ENCODE measurements at regions of chr17 and their contacts with region 1.

Region 1: DNA sequence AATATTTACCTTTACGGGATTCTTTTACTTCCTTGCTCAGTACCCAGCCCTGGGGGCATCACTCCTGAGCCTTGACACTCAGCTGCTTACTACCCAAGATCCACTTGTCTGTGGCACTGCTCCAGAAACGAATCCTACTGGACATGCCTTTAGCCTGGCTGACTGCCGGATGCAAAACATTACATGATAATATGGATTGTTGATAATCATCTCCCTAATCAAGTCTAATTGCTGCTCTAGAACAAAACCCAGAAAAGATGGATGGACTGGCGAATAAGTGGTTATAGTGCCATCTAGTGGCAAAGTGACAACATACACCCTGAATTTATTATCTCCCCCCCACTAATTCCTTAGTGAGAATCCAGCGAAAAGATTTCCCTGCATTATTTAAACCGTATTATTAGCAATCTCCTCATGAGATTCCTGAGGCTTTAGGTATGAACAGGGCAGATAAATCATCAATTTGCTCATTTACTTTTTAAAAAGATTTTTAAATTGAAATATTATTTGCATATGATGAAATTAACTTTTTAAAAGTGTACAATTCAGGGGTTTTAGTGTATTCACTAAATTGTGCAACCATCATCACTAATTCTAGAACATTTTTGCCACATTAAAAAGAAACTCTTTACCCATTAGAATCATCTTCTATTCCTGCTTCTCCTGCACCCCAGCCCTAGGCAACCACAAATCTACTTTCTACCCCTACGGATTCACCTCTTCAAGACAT is 61.6 kb downstream of the RGS9 start:
- DNase-seq: peak; percentile 67
- H3K4me3 ChIP-seq: no peak overlapping the region
- H3K27ac ChIP-seq: no peak overlapping the region
- H3K4me1 ChIP-seq: no peaks in the 10 kb centered on the region
- H3K27me3 ChIP-seq: peaks cover 0 to 4% of the 10 kb centered on the region in 2 experiments
- CTCF ChIP-seq: peak; percentile 41 to 54
- POLR2A ChIP-seq: no peak

Region 2: GRCh38 chr17:64781014-64781753 is 417.6 kb before region 1 on chr17:
- CTCF ChIA-PET with region 1: no interaction called
- POLR2A ChIA-PET with region 1: no interaction called
- dilution Hi-C with region 1: no loop called
- intact Hi-C with region 1: loop called (anchors 5 kb)
- DNase-seq: peak; percentile 51
- H3K4me3 ChIP-seq: peak overlapping the region; percentile 66 to 94 (median 73)
- H3K27ac ChIP-seq: peak overlapping the region; percentile 95
- H3K4me1 ChIP-seq: peaks cover 28% of the 10 kb centered on the region
- H3K27me3 ChIP-seq: no peaks in the 10 kb centered on the region
- CTCF ChIP-seq: no peak
- POLR2A ChIP-seq: peak; percentile 32

Region 3: DNA sequence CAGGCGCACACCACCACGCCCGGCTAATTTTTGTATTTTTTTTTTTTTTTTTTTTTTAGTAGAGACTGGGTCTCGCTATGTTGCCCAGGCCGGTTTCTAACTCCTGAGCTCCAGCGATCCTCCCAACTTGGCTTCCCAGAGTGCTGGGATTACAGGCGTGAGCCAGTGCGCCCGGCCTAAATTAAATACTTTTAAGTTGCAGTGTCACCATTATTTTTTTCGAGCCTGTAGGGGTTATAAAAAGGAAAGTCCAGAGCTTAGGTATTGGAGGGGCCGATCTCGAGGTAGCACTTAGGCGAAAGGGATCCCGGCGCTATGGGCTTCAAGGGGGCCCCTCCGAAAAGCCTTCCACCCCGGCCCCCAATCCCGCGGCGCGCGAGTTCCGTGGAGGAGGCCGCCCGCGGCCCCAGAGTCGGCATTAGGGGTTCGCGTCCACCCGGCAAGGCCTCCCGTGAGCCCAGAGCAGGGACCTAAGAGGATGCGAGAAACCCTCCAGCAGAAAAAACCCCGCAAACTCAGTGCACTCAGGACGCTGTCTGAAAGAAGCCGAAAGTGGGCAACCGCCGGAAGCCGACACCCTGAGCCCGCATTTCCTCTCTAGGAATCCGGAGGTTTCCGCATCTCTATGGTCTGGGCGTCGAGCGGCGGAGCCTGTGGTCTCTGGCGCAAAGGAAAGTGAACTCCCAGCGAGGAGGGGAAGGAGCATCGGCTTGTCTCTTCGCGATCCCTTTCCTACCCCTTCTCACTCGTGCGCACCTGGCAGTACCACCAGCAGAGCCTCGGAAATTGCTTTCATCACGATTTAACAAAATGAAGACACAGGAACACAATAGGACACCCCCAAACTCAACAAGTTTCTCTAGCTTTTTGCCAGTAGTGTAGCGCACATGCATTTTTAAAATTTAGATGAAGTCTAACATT is 75.7 kb before region 1 on chr17:
- CTCF ChIA-PET with region 1: interaction called, 4 read pairs
- POLR2A ChIA-PET with region 1: no interaction called
- dilution Hi-C with region 1: no loop called
- intact Hi-C with region 1: loop called (anchors 2 kb)
- DNase-seq: peak; percentile 83
- H3K4me3 ChIP-seq: peak overlapping the region; percentile 39 to 82 (median 71)
- H3K27ac ChIP-seq: peak overlapping the region; percentile 67
- H3K4me1 ChIP-seq: peaks cover 14% of the 10 kb centered on the region
- H3K27me3 ChIP-seq: peaks cover 6 to 8% of the 10 kb centered on the region in 2 experiments
- CTCF ChIP-seq: no peak
- POLR2A ChIP-seq: peak; percentile 81

Measured in endothelial cell of umbilical vein (primary cell).